Vagina (tissue), 2 donors: ENCODE measurements at regions of chr6 and their contacts with region 1.

Region 1: DNA sequence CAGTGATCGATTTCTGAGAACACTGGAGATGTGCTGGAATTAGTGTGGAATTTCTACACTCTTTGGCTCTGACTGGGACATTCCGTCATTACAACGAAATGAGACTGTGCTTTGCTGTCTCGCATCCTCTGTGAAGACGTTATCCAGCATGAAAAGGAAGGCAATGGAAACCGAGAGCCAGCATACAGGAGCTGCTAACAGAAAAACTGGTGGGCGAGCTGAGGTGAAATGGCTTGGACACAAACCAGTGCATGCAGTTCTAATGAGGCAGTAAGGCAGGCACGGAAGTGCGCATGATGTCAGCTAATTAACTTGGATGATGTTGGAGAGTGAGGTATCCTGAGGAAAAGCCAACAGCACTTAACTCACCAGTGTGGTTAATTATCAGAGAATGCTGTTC is 202.8 kb upstream of the AGPAT4 start:
- DNase-seq: no peak
- H3K4me3 ChIP-seq: no peak overlapping the region
- H3K27ac ChIP-seq: no peak overlapping the region
- H3K4me1 ChIP-seq: peaks cover 3% of the 10 kb centered on the region
- H3K27me3 ChIP-seq: no peaks in the 10 kb centered on the region
- CTCF ChIP-seq: no peak
- POLR2A ChIP-seq: no peak

Region 2: DNA sequence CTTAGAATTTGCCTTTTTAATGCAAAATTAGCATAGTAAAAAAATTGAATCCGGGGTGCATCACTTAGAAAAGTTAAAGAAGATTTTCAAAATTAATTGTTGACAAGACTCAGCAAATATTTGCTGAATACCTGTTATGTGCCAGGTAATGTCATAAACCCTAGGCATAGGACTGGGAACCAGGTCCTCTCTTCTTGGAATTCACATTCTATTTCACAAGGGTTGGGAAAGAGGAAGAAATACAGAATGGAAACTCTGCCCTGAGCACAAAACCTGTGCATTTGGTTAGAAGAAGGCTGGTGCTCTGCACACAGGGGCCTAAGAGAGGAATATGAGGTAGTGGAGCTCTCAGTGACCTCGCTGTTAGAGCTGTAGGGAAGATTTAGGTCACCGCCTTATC is 370.9 kb after region 1 on chr6:
- intact Hi-C with region 1: loop called (anchors 5 kb)
- DNase-seq: no peak
- H3K4me3 ChIP-seq: no peak overlapping the region
- H3K27ac ChIP-seq: no peak overlapping the region
- H3K4me1 ChIP-seq: no peaks in the 10 kb centered on the region
- H3K27me3 ChIP-seq: no peaks in the 10 kb centered on the region
- CTCF ChIP-seq: no peak
- POLR2A ChIP-seq: no peak